Activated CD4-positive, alpha-beta T cell treated with anti-CD3 and anti-CD28 coated beads, Interleukin-2, amount 10 ng/mL, durations not matched to agents 7 days and 5 days (primary cell): ENCODE measurements at regions of chr7 and their contacts with region 1.

Region 1: GRCh38 chr7:5172196-5172775 is 17.7 kb upstream of the WIPI2 start:
- DNase-seq: no peak
- H3K4me3 Mint-ChIP-seq: no peak overlapping the region
- H3K27ac Mint-ChIP-seq: no peak overlapping the region
- H3K4me1 Mint-ChIP-seq: peaks cover 22% of the 10 kb centered on the region
- H3K27me3 Mint-ChIP-seq: peaks cover 2% of the 10 kb centered on the region

Region 2: GRCh38 chr7:5183145-5183544 is 10.9 kb after region 1 on chr7:
- CTCF ChIA-PET with region 1: no interaction called
- POLR2A ChIA-PET with region 1: no interaction called
- DNase-seq: no peak
- H3K4me3 Mint-ChIP-seq: no peak overlapping the region
- H3K27ac Mint-ChIP-seq: no peak overlapping the region
- H3K4me1 Mint-ChIP-seq: peaks cover 7% of the 10 kb centered on the region
- H3K27me3 Mint-ChIP-seq: peaks cover 18% of the 10 kb centered on the region

Region 3: DNA sequence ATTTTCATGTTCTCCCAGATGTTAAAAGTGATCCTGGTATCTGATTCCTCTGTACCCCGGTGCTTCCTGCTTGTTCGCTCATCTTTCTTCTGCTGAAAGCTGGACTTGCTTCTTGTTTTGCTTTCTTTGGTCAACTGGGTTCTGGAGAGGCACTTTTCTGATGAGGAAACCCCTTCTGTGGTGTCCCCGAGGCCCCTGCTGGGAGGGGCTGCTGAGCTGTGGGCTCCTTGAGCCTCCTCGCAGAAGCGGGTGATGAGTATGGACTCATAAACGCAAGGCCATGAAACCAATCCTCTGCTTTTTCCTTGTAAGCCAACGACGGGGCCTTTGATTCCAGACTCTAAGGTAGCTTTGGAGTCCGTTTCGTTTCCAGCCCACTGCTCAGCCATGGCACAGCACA is 25.5 kb after region 1 on chr7:
- CTCF ChIA-PET with region 1: no interaction called
- POLR2A ChIA-PET with region 1: interaction called, 10 read pairs
- DNase-seq: no peak
- H3K4me3 Mint-ChIP-seq: no peak overlapping the region
- H3K27ac Mint-ChIP-seq: no peak overlapping the region
- H3K4me1 Mint-ChIP-seq: peaks cover 8% of the 10 kb centered on the region
- H3K27me3 Mint-ChIP-seq: no peaks in the 10 kb centered on the region